Heart right ventricle (tissue), 16 donors: ENCODE measurements at regions of chr15 and their contacts with region 1.

Region 1: DNA sequence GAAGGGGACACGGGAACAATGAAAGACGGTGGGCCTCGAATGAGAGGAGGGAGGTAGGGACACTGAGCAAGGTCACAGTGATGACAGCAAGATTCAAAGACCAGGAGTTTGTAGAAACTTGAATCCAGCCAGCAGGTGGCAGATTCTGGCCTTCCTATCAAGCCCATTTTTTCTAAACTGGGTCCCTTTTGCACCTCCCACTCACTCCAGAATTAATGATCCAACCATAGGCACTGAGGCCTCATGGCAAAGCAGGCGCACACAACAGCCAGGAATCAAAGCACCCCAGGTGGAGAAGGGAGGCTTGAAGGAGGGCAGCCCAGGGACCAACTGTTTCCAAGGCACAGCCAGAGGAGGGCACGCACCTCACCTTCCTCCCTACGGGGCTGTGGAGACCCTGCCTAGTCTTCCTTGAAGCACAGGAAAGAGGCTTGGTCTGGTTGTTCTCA is 90.2 kb downstream of the ANP32A start:
- DNase-seq: peak in 1 of 2 donors; percentile 65
- ATAC-seq: peak; percentile 36 to 64 (median 52)
- H3K4me3 ChIP-seq: peak overlapping the region in 2 of 10 donors; percentile 9 to 21
- H3K27ac ChIP-seq: peak overlapping the region; percentile 49 to 92 (median 80)
- H3K4me1 ChIP-seq: peaks cover 14 to 85% (median 65%) of the 10 kb centered on the region in 9 donors
- H3K27me3 ChIP-seq: no peaks in the 10 kb centered on the region
- CTCF ChIP-seq: peak; percentile 30 to 78 (median 63)

Region 2: GRCh38 chr15:68658151-68658550 is 72.3 kb before region 1 on chr15:
- intact Hi-C with region 1: no loop called
- DNase-seq: peak in 1 of 2 donors; percentile 41
- ATAC-seq: peak in 4 of 8 donors; percentile 34 to 69 (median 48)
- H3K4me3 ChIP-seq: no peak overlapping the region
- H3K27ac ChIP-seq: no peak overlapping the region
- H3K4me1 ChIP-seq: peaks cover 0 to 9% (median 0%) of the 10 kb centered on the region in 9 donors
- H3K27me3 ChIP-seq: no peaks in the 10 kb centered on the region
- CTCF ChIP-seq: no peak

Region 3: DNA sequence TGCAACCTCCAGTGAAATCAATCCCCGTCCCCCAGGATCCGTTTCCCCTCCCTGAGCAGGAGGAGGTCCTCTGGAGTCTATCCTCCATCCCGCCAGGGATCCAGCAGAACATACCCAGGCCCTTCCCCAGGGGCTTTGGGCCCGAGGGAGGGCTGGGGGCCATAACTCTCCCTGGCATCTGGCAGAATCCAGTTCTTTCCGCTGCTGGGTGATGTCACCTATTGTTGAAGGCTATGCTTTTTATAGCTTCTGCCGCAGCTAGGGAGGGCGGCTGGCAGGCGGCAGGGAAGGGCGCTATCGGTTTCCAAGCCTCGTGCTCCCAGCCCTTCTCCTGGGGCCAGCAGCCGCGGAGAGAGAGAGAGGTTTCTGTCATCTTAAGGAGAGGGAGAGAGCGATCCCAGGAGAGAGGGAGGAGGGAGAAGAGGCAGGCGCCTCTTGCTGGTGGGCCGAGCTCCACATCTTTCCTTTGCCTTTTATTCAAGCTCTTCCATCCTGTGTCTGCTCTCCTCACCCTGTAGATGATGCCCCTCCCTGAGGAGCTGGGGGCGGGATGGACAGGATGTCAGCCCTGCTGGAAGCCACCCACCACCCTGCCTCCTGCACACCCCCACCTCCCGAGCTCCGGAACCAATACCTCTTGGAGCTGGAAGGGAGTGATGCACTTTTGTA is 29.9 kb before region 1 on chr15:
- intact Hi-C with region 1: loop called in 2 of 10 experiments (anchors 2 kb)
- DNase-seq: peak; percentile 74 to 81
- ATAC-seq: peak; percentile 82 to 90 (median 87)
- H3K4me3 ChIP-seq: peak overlapping the region in 7 of 10 donors; percentile 1 to 28 (median 23)
- H3K27ac ChIP-seq: peak overlapping the region; percentile 69 to 96 (median 87)
- H3K4me1 ChIP-seq: peaks cover 29 to 75% (median 51%) of the 10 kb centered on the region in 9 donors
- H3K27me3 ChIP-seq: no peaks in the 10 kb centered on the region
- CTCF ChIP-seq: peak in 2 of 9 donors; percentile 3 to 14

Region 4: DNA sequence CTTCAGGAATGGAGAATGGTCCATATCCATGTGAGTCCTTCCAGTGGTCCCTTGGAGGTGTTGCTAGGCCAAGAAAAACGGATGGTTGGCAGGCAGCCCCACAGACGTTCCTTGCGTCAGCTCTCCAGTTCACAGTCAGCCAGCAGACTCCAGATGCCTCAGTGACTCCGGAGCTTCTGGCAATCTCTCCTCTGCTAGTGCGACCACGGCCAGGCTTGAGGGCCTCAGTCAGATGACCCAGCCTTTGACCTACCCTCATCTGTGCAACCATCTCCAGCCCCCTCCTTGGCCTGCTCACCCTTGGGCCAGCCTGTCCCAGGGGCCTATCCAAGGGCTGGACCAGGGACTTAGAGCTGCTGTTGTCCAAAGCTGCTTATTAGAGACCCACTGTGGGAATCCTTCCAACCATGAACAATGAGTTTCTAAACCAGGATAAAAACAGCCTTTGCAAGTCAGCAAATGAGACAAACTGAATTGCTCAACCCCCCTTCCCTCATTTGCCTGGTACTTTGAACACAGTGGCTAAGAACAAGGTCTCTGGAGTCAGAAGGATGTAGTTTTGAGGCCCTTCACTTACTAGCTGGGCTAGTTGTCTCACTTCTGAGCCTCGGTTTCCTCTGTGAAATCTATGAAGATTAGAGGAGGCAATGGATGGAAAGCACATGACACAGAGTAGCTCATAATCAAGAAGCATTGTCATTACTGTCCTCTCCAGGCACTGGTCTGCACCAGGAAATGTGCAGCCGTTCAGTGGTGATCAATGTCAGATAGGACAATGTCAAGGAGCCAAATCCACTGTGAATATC is 45.4 kb after region 1 on chr15:
- intact Hi-C with region 1: loop called in 2 of 10 experiments (anchors 1 to 5 kb)
- DNase-seq: peak; percentile 85 to 90
- ATAC-seq: peak; percentile 86 to 95 (median 90)
- H3K4me3 ChIP-seq: no peak overlapping the region
- H3K27ac ChIP-seq: peak overlapping the region; percentile 20 to 88 (median 66)
- H3K4me1 ChIP-seq: peaks cover 6 to 33% (median 25%) of the 10 kb centered on the region in 9 donors
- H3K27me3 ChIP-seq: no peaks in the 10 kb centered on the region
- CTCF ChIP-seq: no peak

Region 5: DNA sequence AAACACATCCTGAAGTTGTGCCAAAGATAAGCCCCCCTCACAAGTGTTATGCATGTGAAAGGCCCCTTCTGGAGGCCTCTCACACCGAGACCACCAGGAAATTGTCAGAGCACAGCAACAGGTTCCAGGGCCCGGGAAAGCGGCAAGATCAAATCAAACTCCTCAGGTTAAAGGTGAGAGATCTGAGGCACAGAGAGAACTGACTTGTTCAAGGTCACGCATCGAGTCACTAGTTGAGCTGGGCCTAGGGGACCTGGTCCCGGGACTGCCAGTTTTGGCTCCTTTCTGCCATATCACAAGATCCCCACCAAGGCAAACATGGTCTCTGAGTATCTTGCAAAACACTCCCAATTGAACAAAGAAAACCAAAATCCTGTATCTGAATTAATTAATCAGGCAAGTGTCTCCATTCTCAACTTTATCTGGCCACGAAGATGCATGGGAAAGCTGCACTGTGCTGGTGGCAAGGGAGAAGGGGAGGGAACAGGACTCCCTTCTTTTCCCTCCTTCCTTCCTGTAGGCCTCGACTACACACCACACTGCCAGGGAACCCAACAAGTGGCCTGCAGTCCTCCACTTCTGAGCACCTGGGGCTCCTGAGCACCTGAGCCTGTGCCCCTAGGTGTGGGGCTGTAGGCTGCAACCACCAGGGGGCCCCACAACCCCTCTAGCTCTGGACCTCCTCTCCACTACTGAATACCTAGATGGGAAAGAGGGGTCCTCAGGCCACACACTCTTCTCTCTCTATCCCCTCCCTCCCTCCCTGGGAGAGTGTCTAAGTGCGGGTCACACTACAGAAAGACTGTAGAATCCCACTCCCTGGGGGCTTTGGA is 52.9 kb after region 1 on chr15:
- intact Hi-C with region 1: loop called in 2 of 10 experiments (anchors 5 kb)
- DNase-seq: peak in 1 of 2 donors; percentile 41
- ATAC-seq: peak in 6 of 8 donors; percentile 38 to 51 (median 44)
- H3K4me3 ChIP-seq: no peak overlapping the region
- H3K27ac ChIP-seq: peak overlapping the region in 5 of 10 donors; percentile 3 to 90 (median 74)
- H3K4me1 ChIP-seq: peaks cover 10 to 41% (median 33%) of the 10 kb centered on the region in 9 donors
- H3K27me3 ChIP-seq: no peaks in the 10 kb centered on the region
- CTCF ChIP-seq: peak; percentile 37 to 77 (median 66)

Region 6: DNA sequence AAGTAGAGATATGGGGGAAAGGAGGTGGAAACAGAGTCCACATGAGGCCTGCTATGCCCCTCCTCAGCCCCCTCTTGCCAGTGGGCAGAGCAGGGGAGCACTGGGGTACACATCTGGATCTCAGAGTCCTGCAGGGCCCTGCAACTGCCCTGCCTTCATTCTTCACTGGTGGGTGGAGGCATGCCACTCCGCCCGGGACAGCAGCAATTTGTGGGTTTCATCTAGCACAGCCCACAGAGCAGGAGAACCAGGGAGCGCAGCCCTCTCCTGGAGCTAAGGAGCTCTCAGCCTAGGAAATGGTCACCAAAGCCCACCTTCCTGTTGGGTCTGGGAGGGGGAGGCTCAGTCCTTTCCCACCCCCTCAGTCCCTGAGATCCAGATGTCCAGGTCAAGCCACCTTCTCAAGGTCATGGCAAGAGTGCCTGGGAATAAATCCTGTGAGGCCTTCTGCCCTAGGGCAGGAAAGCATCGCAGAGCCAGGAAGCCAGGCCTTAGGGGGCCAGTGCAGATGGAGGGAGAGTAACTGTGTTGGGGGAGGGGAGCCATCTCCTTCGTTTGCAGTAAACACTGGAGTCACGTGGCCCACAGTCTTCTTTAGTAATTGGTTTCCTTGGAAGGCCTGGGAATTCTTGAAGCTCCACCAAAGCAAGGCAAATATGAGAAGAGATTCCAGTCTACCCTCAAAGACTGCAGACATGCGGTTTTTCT is 59.2 kb after region 1 on chr15:
- intact Hi-C with region 1: loop called in 2 of 10 experiments (anchors 5 kb)
- DNase-seq: peak; percentile 18 to 48
- ATAC-seq: peak in 7 of 8 donors; percentile 14 to 31 (median 25)
- H3K4me3 ChIP-seq: no peak overlapping the region
- H3K27ac ChIP-seq: peak overlapping the region in 9 of 10 donors; percentile 17 to 91 (median 61)
- H3K4me1 ChIP-seq: peaks cover 50 to 81% (median 70%) of the 10 kb centered on the region in 9 donors
- H3K27me3 ChIP-seq: no peaks in the 10 kb centered on the region
- CTCF ChIP-seq: no peak

Region 7: DNA sequence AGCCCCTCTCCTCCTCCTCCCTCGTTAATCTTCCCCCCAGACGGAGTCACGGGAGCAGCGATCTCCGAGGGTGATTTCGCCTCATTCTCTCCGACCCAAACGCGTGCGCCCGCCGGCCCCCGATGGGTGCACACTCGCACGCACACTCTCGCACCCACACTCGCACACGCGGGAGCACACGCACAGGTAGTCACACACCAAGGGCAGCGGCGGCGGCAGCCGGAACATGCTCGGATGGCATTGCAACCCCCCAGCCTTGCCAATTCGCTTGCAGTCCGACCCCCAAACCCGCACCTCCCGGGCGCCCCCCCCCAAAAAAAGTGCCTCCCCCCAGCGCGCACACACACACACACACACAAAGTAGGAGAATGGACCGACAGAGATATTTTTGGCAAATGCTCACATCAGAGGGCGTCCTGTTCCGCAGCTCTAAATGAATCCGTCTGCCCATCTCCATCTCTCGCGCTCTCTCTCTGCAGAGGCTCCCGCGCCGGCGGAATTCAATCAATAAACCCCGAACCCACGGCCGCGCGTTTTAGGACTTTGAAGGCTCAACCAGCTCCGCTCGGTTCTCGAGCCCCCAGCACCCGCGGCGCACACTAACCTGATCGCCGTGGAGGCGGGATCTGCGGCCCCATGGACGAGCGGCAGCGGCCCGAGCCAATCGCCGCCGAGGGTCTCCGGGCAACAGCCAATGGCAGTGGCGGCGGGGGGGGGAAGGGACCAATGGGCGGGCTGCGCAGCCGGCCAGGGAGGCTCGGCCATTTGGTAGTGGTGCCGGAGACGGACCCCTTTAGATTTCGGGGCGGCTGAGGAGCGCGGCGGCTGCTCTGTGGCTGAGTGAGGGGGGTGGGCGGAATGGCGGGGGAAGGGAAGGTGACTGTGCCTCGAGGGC is 90.0 kb after region 1 on chr15 and contains the start of gene ANP32A:
- intact Hi-C with region 1: loop called in 7 of 10 experiments (anchors 2 to 5 kb)
- DNase-seq: peak; percentile 99
- ATAC-seq: peak; percentile 77 to 92 (median 86)
- H3K4me3 ChIP-seq: peak within 1 kb of the TSS; percentile 73 to 94 (median 90)
- H3K27ac ChIP-seq: peak within 1 kb of the TSS; percentile 99 to 100 (median 100)
- H3K4me1 ChIP-seq: peaks cover 7 to 32% (median 26%) of the 10 kb centered on the region in 9 donors
- H3K27me3 ChIP-seq: no peaks in the 10 kb centered on the region
- CTCF ChIP-seq: no peak
- total RNA-seq, gene ANP32A: 122 to 201 (median 152) TPM

Region 8: GRCh38 chr15:68829068-68829467 is 98.6 kb after region 1 on chr15:
- intact Hi-C with region 1: loop called in 3 of 10 experiments (anchors 5 kb)
- DNase-seq: no peak
- ATAC-seq: peak in 7 of 8 donors; percentile 49 to 83 (median 73)
- H3K4me3 ChIP-seq: no peak overlapping the region
- H3K27ac ChIP-seq: no peak overlapping the region
- H3K4me1 ChIP-seq: peaks cover 0 to 12% (median 0%) of the 10 kb centered on the region in 9 donors
- H3K27me3 ChIP-seq: no peaks in the 10 kb centered on the region
- CTCF ChIP-seq: peak in 8 of 9 donors; percentile 15 to 72 (median 61)